HepG2 (cell line): ENCODE measurements at regions of chr13 and their contacts with region 1.

Region 1: GRCh38 chr13:49996951-49997895 is at the start of gene TRIM13:
- DNase-seq: peak; percentile 79
- ATAC-seq: peak; percentile 91
- H3K4me3 ChIP-seq: peak within 1 kb of the TSS; percentile 88 to 98 (median 95)
- H3K27ac ChIP-seq: peak within 1 kb of the TSS; percentile 94
- H3K4me1 ChIP-seq: peaks cover 30% of the 10 kb centered on the region
- H3K27me3 ChIP-seq: no peaks in the 10 kb centered on the region; a peak in 1 of 5 replicates
- CTCF ChIP-seq: peak; percentile 85
- EP300 ChIP-seq: no peak
- POLR2A ChIP-seq: peak; percentile 82 to 84
- RAD21 ChIP-seq: peak; percentile 68
- total RNA-seq, gene TRIM13: 18.8 and 22.0 TPM in 2 replicates

Region 2: GRCh38 chr13:49936085-49936940 is 60.9 kb before region 1 on chr13 and contains the start of gene SPRYD7:
- CTCF ChIA-PET with region 1: no interaction called
- POLR2A ChIA-PET with region 1: interaction called, 14 read pairs
- in situ Hi-C with region 1: no loop called
- intact Hi-C with region 1: no loop called
- DNase-seq: peak; percentile 95
- ATAC-seq: peak; percentile 98
- H3K4me3 ChIP-seq: peak within 1 kb of the TSS; percentile 81 to 94 (median 88)
- H3K27ac ChIP-seq: peak within 1 kb of the TSS; percentile 74
- H3K4me1 ChIP-seq: peaks cover 41% of the 10 kb centered on the region
- H3K27me3 ChIP-seq: no peaks in the 10 kb centered on the region; a peak in 1 of 5 replicates
- CTCF ChIP-seq: peak; percentile 99
- EP300 ChIP-seq: peak in 1 of 2 experiments; percentile 46; a peak in 1 of 4 replicates
- POLR2A ChIP-seq: peak; percentile 49 to 88
- RAD21 ChIP-seq: peak; percentile 81
- total RNA-seq, gene SPRYD7: 5.9 and 6.8 TPM in 2 replicates

Region 3: DNA sequence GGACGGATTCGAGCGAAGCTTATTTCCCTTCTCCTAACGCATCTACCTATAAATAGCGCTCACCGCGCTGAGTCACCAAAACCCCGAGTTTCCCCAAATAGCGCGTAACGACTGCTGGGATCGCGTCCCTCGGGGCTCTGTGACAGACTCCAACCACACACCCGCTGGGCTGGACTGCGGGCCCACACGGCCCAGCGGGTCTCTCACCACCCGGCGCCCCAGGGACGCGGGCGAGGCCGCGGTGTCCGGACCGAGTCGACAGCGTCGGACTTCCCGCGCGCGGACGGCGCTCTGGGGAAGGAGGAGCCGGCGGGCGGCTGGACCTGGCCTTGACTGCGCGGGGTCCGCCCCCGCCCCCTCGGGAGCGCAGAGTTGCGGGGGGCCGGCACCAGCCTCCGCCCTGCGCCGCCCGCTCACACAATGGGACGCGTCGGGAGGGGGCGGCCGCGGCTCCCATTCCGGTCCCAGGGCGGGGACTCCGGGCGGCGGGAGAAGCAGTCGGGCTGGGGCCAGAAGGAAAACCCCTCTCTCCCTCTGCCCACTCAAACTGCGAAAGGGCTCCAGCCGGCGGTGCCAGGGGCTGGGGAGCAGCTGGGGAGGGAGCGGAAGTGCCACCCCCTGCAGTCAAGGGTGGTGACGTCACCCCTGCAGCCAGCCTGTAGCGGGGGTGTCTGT is 126.8 kb after region 1 on chr13:
- CTCF ChIA-PET with region 1: no interaction called
- POLR2A ChIA-PET with region 1: interaction called, 33 read pairs
- in situ Hi-C with region 1: no loop called
- intact Hi-C with region 1: no loop called
- DNase-seq: peak; percentile 90
- ATAC-seq: peak; percentile 75
- H3K4me3 ChIP-seq: peak overlapping the region; percentile 67 to 95 (median 86)
- H3K27ac ChIP-seq: peak overlapping the region; percentile 98
- H3K4me1 ChIP-seq: peaks cover 34% of the 10 kb centered on the region
- H3K27me3 ChIP-seq: peaks cover 0 to 5% of the 10 kb centered on the region in 2 experiments; a peak in 1 of 5 replicates
- CTCF ChIP-seq: peak; percentile 40
- EP300 ChIP-seq: no peak
- POLR2A ChIP-seq: peak in 1 of 2 experiments; percentile 74; a peak in 2 of 4 replicates
- RAD21 ChIP-seq: peak; percentile 75

Region 4: GRCh38 chr13:50244713-50245574 is 247.7 kb after region 1 on chr13:
- CTCF ChIA-PET with region 1: no interaction called
- POLR2A ChIA-PET with region 1: interaction called, 8 read pairs
- in situ Hi-C with region 1: no loop called
- intact Hi-C with region 1: loop called (anchors 10 kb)
- DNase-seq: peak; percentile 99
- ATAC-seq: peak; percentile 95
- H3K4me3 ChIP-seq: peak overlapping the region in 2 of 3 experiments; percentile 17 to 42; a peak in 1 of 6 replicates
- H3K27ac ChIP-seq: peak overlapping the region; percentile 98
- H3K4me1 ChIP-seq: peaks cover 90% of the 10 kb centered on the region
- H3K27me3 ChIP-seq: no peaks in the 10 kb centered on the region
- CTCF ChIP-seq: 0 out of 2 replicates have a peak, but pooled peaks have one; percentile 22
- EP300 ChIP-seq: peak; percentile 72 to 95; a peak in 3 of 4 replicates
- POLR2A ChIP-seq: peak in 1 of 2 experiments; percentile 58; a peak in 1 of 4 replicates
- RAD21 ChIP-seq: peak; percentile 52; the same call in 1 of the 2 replicates

Region 5: GRCh38 chr13:50529154-50529882 is 532.1 kb after region 1 on chr13:
- CTCF ChIA-PET with region 1: no interaction called
- POLR2A ChIA-PET with region 1: no interaction called
- in situ Hi-C with region 1: loop called (anchors 25 kb)
- intact Hi-C with region 1: no loop called
- DNase-seq: no peak
- ATAC-seq: no peak; the same call in 2 of the 3 replicates
- H3K4me3 ChIP-seq: no peak overlapping the region
- H3K27ac ChIP-seq: peak overlapping the region; percentile 34
- H3K4me1 ChIP-seq: peaks cover 10% of the 10 kb centered on the region
- H3K27me3 ChIP-seq: no peaks in the 10 kb centered on the region
- CTCF ChIP-seq: no peak
- EP300 ChIP-seq: no peak
- POLR2A ChIP-seq: no peak
- RAD21 ChIP-seq: no peak

Region 6: GRCh38 chr13:51070005-51070649 is 1072.9 kb after region 1 on chr13:
- CTCF ChIA-PET with region 1: no interaction called
- POLR2A ChIA-PET with region 1: no interaction called
- in situ Hi-C with region 1: loop called (anchors 25 kb)
- intact Hi-C with region 1: no loop called
- DNase-seq: peak; percentile 44
- ATAC-seq: peak; percentile 95
- H3K4me3 ChIP-seq: no peak overlapping the region
- H3K27ac ChIP-seq: no peak overlapping the region
- H3K4me1 ChIP-seq: peaks cover 10% of the 10 kb centered on the region
- H3K27me3 ChIP-seq: peaks cover 0 to 21% of the 10 kb centered on the region in 2 experiments; a peak in 4 of 5 replicates
- CTCF ChIP-seq: peak; percentile 95
- EP300 ChIP-seq: no peak
- POLR2A ChIP-seq: no peak
- RAD21 ChIP-seq: peak; percentile 91